Activated naive CD4-positive, alpha-beta T cell treated with anti-CD3 and anti-CD28 coated beads for 36 hours (primary cell): ENCODE measurements at regions of chr7 and their contacts with region 1.

Region 1: GRCh38 chr7:25894902-25895791 is 256.9 kb upstream of the NFE2L3 start:
- DNase-seq: peak; percentile 74
- H3K4me3 Mint-ChIP-seq: peak overlapping the region; percentile 6
- H3K27ac Mint-ChIP-seq: no peak overlapping the region
- H3K4me1 Mint-ChIP-seq: peaks cover 25% of the 10 kb centered on the region
- H3K27me3 Mint-ChIP-seq: peaks cover under 1% of the 10 kb centered on the region

Region 2: DNA sequence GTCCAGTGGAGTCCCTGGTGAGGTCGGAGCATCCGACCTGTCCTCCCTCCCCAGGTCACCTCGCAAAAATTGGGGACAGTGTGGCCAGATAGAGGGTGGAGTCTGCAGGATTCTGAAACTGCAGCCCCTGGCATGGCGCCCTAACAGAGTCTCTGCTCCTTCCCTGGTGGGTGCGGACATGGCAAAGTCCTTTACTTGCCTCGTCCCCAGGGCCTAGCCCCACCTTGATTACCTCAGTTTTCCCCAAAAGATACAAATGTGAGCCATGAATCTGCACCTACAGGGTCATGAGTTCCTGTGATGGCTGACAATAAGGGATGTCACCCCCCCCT is 714.6 kb before region 1 on chr7:
- CTCF ChIA-PET with region 1: no interaction called
- intact Hi-C with region 1: no loop called
- DNase-seq: no peak
- H3K4me3 Mint-ChIP-seq: peak overlapping the region; percentile 83
- H3K27ac Mint-ChIP-seq: peak overlapping the region; percentile 81
- H3K4me1 Mint-ChIP-seq: peaks cover 19% of the 10 kb centered on the region
- H3K27me3 Mint-ChIP-seq: no peaks in the 10 kb centered on the region

Region 3: DNA sequence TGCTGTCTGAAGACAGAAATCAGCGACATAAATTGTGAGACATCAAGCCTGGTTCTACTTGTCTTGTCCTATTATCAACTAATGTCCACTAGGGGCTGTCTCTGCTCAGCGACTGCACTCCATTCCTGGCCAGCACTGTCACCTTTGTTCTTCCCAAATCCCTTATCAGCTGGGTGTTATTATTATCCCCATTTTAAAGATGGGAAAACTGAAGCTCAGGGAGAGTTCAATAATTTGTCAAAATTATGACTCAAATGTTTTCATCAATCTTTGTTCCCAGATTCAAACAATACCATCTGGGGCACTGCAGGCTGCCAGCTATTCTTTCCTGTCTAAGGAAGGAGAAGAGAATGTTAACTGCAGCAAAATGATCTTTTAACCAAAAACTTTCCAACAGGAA is 174.7 kb before region 1 on chr7:
- CTCF ChIA-PET with region 1: no interaction called
- intact Hi-C with region 1: no loop called
- DNase-seq: no peak
- H3K4me3 Mint-ChIP-seq: no peak overlapping the region
- H3K27ac Mint-ChIP-seq: no peak overlapping the region
- H3K4me1 Mint-ChIP-seq: no peaks in the 10 kb centered on the region
- H3K27me3 Mint-ChIP-seq: peaks cover 9% of the 10 kb centered on the region

Region 4: DNA sequence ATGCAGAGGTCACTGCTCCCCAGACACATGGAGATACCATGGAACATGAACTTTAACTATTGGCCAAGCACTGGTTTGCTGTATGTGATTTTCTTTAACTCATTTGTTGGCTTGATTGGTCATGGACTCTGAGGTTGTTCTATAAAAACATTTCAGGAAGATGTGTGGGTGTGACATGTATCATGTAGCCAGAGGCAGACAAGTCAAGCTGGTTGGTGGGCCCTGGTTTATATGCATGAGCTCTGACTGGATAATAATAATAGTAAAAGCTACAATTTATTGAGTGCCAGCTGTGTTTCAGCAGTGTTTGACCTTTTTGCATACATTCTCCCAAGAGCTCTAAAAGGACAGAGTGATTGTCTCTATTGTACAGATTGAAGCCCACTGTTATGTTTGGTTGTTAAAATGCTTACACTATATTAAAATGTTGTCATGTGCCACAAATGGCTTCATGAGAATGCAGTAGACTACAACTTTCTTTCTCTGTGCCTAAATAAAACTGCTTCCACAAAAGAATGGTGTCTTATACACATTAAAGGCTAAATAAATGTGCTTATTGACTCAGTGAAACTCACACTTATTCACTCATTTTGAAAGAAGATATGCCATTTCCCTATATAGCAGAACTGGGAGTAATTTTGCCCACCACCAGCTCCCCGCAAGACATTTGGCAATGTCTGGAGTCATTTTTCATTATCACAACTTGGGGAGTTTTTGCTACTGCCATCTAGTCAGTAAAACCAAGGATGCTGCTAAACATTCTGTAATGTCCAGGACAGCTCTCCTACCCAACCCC is 13.2 kb after region 1 on chr7:
- CTCF ChIA-PET with region 1: interaction called, 12 read pairs
- intact Hi-C with region 1: no loop called
- DNase-seq: no peak
- H3K4me3 Mint-ChIP-seq: no peak overlapping the region
- H3K27ac Mint-ChIP-seq: no peak overlapping the region
- H3K4me1 Mint-ChIP-seq: peaks cover 6% of the 10 kb centered on the region
- H3K27me3 Mint-ChIP-seq: peaks cover 4% of the 10 kb centered on the region

Region 5: GRCh38 chr7:26061688-26062150 is 166.6 kb after region 1 on chr7:
- CTCF ChIA-PET with region 1: interaction called, 32 read pairs
- intact Hi-C with region 1: loop called (anchors 1 kb)
- DNase-seq: peak; percentile 86
- H3K4me3 Mint-ChIP-seq: no peak overlapping the region
- H3K27ac Mint-ChIP-seq: no peak overlapping the region
- H3K4me1 Mint-ChIP-seq: peaks cover 9% of the 10 kb centered on the region
- H3K27me3 Mint-ChIP-seq: peaks cover 12% of the 10 kb centered on the region

Region 6: GRCh38 chr7:26151953-26152781 is 257.0 kb after region 1 on chr7 and contains the start of gene NFE2L3:
- CTCF ChIA-PET with region 1: interaction called, 4 read pairs
- intact Hi-C with region 1: loop called (anchors 10 kb)
- DNase-seq: peak; percentile 86
- H3K4me3 Mint-ChIP-seq: peak within 1 kb of the TSS; percentile 95
- H3K27ac Mint-ChIP-seq: peak within 1 kb of the TSS; percentile 98
- H3K4me1 Mint-ChIP-seq: peaks cover 50% of the 10 kb centered on the region
- H3K27me3 Mint-ChIP-seq: no peaks in the 10 kb centered on the region
- total RNA-seq, gene NFE2L3: 12.5 to 12.9 TPM

Region 7: GRCh38 chr7:26237035-26237807 is 342.1 kb after region 1 on chr7:
- CTCF ChIA-PET with region 1: no interaction called
- intact Hi-C with region 1: no loop called
- DNase-seq: no peak
- H3K4me3 Mint-ChIP-seq: no peak overlapping the region
- H3K27ac Mint-ChIP-seq: no peak overlapping the region
- H3K4me1 Mint-ChIP-seq: no peaks in the 10 kb centered on the region
- H3K27me3 Mint-ChIP-seq: no peaks in the 10 kb centered on the region

Region 8: DNA sequence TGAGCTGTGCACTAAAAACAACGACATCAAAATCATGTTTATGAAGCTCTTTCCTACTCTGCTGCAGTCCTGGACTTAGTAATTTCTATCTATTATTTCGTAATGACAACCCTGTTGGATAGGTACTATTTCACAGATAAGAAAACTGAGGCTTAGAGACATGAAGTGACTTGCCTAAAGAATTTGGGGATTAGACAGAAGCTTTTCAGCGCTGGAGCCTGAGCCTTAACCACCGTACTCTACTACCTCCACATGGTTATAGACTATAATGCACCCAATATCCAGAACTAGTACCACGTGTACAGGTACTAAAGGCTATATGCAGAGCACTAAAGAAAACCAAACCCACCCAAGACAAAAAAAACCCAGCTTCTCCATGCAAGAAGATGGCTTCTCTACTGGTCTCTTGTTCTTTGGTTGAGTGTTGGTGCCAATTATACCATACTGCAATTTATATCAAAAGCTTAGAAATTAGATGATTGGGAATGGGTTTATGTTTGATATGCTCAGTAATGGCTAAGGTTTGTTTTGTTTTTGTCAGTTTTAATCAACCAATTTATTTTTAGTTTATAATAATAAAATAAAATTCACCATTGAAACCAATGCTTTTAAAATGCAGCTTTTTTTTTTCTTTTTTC is 390.0 kb after region 1 on chr7:
- CTCF ChIA-PET with region 1: no interaction called
- intact Hi-C with region 1: loop called (anchors 2 kb)
- DNase-seq: peak; percentile 38
- H3K4me3 Mint-ChIP-seq: no peak overlapping the region
- H3K27ac Mint-ChIP-seq: no peak overlapping the region
- H3K4me1 Mint-ChIP-seq: peaks cover 2% of the 10 kb centered on the region
- H3K27me3 Mint-ChIP-seq: no peaks in the 10 kb centered on the region

Region 9: DNA sequence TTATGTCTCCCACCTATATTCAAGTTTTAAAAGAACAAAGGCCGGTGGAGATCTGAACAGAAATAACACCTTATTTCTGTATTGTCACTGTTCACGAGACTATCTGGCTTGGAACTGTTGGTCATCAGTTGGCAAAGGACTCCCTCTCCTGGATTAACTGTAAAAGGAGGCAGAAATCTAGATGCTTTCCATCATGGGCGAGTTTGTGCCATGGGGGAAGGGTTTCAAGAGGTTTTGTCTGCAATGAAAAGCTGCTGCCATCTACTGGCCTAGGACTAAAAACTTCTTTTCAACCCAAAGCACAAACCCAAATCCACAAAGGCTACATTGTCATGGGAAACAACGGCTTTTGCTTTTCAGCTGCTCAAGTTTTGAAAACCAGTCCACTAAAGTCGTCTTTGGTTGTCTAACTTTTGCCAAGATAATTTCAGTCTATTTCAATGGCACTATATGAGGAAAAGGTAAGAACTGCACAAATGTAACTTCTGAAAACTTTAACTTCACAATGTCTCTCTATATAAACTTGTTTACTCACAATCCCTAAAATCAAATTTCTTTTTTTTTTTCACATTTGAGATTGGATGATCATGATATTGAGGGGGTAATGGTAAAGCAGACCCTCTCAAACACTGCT is 772.5 kb after region 1 on chr7:
- CTCF ChIA-PET with region 1: interaction called, 8 read pairs
- intact Hi-C with region 1: loop called (anchors 1 kb)
- DNase-seq: peak; percentile 78
- H3K4me3 Mint-ChIP-seq: no peak overlapping the region
- H3K27ac Mint-ChIP-seq: no peak overlapping the region
- H3K4me1 Mint-ChIP-seq: peaks cover 19% of the 10 kb centered on the region
- H3K27me3 Mint-ChIP-seq: peaks cover 4% of the 10 kb centered on the region